ENCODE measurements at regions of chr1 and their contacts with region 1.

Region 1: DNA sequence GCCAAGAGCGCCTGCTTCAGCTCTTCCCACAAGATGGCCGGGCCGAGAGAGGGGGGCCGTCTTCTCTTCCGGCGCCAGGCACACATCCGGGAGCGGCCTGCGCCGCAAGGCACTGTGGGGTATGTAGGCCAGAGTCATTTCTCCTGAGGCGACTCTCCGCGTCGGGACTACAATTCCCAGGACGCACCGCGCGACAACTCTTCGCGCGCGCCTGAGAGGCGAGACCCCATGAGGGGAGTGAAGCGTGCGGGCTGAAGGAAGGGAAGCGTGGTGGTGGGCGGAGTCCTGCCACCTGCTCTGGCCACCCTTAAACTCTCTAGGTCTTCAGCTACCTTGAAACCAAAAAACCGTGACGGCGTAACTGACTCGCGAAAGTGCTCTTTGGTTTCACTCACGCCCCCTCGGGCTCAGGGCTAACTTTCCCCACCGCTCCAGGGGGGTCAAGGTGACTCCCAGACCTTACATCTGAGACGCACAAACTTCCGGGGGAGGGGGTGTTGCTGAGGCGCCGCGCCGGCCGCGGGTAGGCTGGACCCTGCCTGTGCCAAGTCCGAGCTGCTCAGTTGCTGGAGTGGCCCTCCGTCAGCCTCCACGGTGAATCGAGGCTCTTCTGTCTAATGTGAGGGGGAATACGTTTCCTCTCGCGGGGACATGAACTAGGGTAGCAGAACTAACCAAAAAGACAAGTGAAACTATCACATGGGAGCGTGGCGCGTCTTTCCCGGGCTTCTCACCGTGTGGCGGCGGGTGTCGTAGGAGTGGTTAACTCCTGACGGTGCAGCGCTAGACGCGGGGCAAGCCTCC is at the start of gene SERBP1:
- DNase-seq: peak; percentile 94
- ATAC-seq: peak; percentile 96
- H3K4me3 ChIP-seq: peak within 1 kb of the TSS; percentile 73 to 87
- H3K27ac ChIP-seq: peak within 1 kb of the TSS; percentile 94
- H3K4me1 ChIP-seq: peaks cover 24% of the 10 kb centered on the region
- H3K27me3 ChIP-seq: no peaks in the 10 kb centered on the region
- CTCF ChIP-seq: no peak
- total RNA-seq, gene SERBP1: 230 TPM

Region 2: GRCh38 chr1:67404212-67404620 is 26.3 kb before region 1 on chr1:
- CTCF ChIA-PET with region 1: no interaction called
- POLR2A ChIA-PET with region 1: interaction called, 12 read pairs
- in situ Hi-C with region 1: no loop called
- intact Hi-C with region 1: no loop called
- DNase-seq: no peak
- ATAC-seq: no peak
- H3K4me3 ChIP-seq: no peak overlapping the region
- H3K27ac ChIP-seq: no peak overlapping the region
- H3K4me1 ChIP-seq: no peaks in the 10 kb centered on the region
- H3K27me3 ChIP-seq: no peaks in the 10 kb centered on the region
- CTCF ChIP-seq: no peak

Region 3: DNA sequence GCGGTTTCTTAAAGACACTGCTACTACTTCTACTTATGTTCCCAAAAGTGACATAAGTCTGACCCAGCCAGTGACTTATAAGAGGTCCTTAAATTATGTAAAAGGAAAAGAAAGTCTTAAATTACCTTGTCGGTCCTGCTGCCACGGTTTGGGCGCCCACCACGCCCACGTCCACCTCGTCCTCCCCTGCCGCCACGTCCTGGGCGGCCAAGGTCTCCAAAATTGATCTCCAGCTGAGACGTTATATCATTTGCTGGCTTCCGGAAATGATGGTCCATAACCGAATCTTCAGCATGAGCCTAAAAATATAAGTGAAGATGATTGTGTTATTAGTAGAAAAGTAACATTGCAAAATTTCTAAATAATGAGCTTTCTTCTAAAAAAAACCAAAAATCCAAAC is 15.5 kb before region 1 on chr1:
- CTCF ChIA-PET with region 1: no interaction called
- POLR2A ChIA-PET with region 1: interaction called, 13 read pairs
- in situ Hi-C with region 1: no loop called
- intact Hi-C with region 1: no loop called
- DNase-seq: no peak
- ATAC-seq: no peak
- H3K4me3 ChIP-seq: no peak overlapping the region
- H3K27ac ChIP-seq: no peak overlapping the region
- H3K4me1 ChIP-seq: no peaks in the 10 kb centered on the region
- H3K27me3 ChIP-seq: no peaks in the 10 kb centered on the region
- CTCF ChIP-seq: no peak

Region 4: GRCh38 chr1:67629370-67630075 is 199.0 kb after region 1 on chr1:
- CTCF ChIA-PET with region 1: no interaction called
- POLR2A ChIA-PET with region 1: no interaction called
- in situ Hi-C with region 1: no loop called
- intact Hi-C with region 1: no loop called
- DNase-seq: no peak
- ATAC-seq: peak; percentile 70
- H3K4me3 ChIP-seq: no peak overlapping the region
- H3K27ac ChIP-seq: peak overlapping the region; percentile 87
- H3K4me1 ChIP-seq: peaks cover 24% of the 10 kb centered on the region
- H3K27me3 ChIP-seq: no peaks in the 10 kb centered on the region
- CTCF ChIP-seq: 0 out of 2 replicates have a peak, but pooled peaks have one; percentile 5